ENCODE measurements at regions of chr9 and their contacts with region 1.

Region 1: GRCh38 chr9:128249908-128250838 is 25.6 kb downstream of the GOLGA2 start:
- DNase-seq: peak; percentile 95 to 100 (median 99)
- ATAC-seq: peak; percentile 95
- H3K4me3 ChIP-seq: peak overlapping the region; percentile 52 to 97
- H3K4me3 Mint-ChIP-seq: peak overlapping the region; percentile 86
- H3K27ac ChIP-seq: peak overlapping the region; percentile 52 to 86
- H3K27ac Mint-ChIP-seq: peak overlapping the region; percentile 97
- H3K4me1 ChIP-seq: peaks cover 22% of the 10 kb centered on the region
- H3K4me1 Mint-ChIP-seq: peaks cover 18% of the 10 kb centered on the region
- H3K27me3 ChIP-seq: no peaks in the 10 kb centered on the region
- H3K27me3 Mint-ChIP-seq: peaks cover 5% of the 10 kb centered on the region
- CTCF ChIP-seq: no peak

Region 2: GRCh38 chr9:127828262-127829031 is 421.7 kb before region 1 on chr9:
- CTCF ChIA-PET with region 1: no interaction called
- POLR2A ChIA-PET with region 1: no interaction called
- intact Hi-C with region 1: no loop called
- DNase-seq: no peak
- ATAC-seq: no peak
- H3K4me3 ChIP-seq: no peak overlapping the region
- H3K4me3 Mint-ChIP-seq: no peak overlapping the region
- H3K27ac ChIP-seq: no peak overlapping the region
- H3K27ac Mint-ChIP-seq: no peak overlapping the region
- H3K4me1 ChIP-seq: peaks cover 9% of the 10 kb centered on the region
- H3K4me1 Mint-ChIP-seq: peaks cover 12% of the 10 kb centered on the region
- H3K27me3 ChIP-seq: no peaks in the 10 kb centered on the region
- H3K27me3 Mint-ChIP-seq: no peaks in the 10 kb centered on the region
- CTCF ChIP-seq: no peak

Region 3: GRCh38 chr9:128159784-128160602 is 90.2 kb before region 1 on chr9 and contains the start of gene BBLN:
- CTCF ChIA-PET with region 1: no interaction called
- POLR2A ChIA-PET with region 1: interaction called, 7 read pairs
- intact Hi-C with region 1: loop called (anchors 1 kb)
- DNase-seq: peak; percentile 87 to 95 (median 93)
- ATAC-seq: peak; percentile 87
- H3K4me3 ChIP-seq: peak within 1 kb of the TSS; percentile 90 to 94
- H3K4me3 Mint-ChIP-seq: peak within 1 kb of the TSS; percentile 79
- H3K27ac ChIP-seq: peak within 1 kb of the TSS; percentile 70 to 86
- H3K27ac Mint-ChIP-seq: peak within 1 kb of the TSS; percentile 90
- H3K4me1 ChIP-seq: peaks cover 19% of the 10 kb centered on the region
- H3K4me1 Mint-ChIP-seq: peaks cover 17% of the 10 kb centered on the region
- H3K27me3 ChIP-seq: no peaks in the 10 kb centered on the region
- H3K27me3 Mint-ChIP-seq: no peaks in the 10 kb centered on the region
- CTCF ChIP-seq: no peak
- total RNA-seq, gene BBLN: 56.6 to 67.4 TPM

Region 4: DNA sequence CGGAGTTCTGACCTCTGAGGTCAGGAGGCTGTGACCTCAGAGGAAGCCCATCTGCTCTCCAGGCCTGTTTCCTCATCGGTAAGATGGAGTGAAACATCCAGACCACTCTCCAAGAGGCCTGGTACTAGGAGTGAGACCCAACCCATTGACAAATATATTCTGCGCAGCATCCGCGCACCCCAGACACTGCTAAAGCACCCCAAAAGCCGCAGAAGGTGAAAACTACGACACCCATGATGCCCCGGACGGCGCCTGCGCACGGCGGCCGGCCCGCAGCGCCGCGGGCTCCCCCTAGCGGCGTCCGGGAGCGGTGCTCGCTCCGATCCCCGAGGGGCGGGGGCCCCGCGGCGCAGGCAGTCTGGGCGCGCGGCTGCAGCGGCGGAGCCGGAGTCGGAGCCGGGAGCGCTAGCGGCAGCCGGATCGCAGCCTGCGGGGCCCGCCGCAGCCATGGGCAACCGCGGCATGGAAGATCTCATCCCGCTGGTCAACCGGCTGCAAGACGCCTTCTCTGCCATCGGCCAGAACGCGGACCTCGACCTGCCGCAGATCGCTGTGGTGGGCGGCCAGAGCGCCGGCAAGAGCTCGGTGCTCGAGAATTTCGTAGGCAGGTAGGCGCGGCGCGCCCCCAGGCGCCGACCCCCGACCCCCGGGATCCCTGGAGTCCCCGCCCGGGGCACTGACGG is 47.0 kb before region 1 on chr9 and contains the start of gene DNM1:
- CTCF ChIA-PET with region 1: no interaction called
- POLR2A ChIA-PET with region 1: no interaction called
- intact Hi-C with region 1: loop called (anchors 1 kb)
- DNase-seq: peak; percentile 52 to 88 (median 67)
- ATAC-seq: peak; percentile 99
- H3K4me3 ChIP-seq: peak within 1 kb of the TSS; percentile 55 to 66
- H3K4me3 Mint-ChIP-seq: peak within 1 kb of the TSS; percentile 72
- H3K27ac ChIP-seq: no peak within 1 kb of the TSS
- H3K27ac Mint-ChIP-seq: no peak within 1 kb of the TSS
- H3K4me1 ChIP-seq: peaks cover 13% of the 10 kb centered on the region
- H3K4me1 Mint-ChIP-seq: peaks cover 9% of the 10 kb centered on the region
- H3K27me3 ChIP-seq: peaks cover 3 to 9% of the 10 kb centered on the region in 2 experiments
- H3K27me3 Mint-ChIP-seq: peaks cover 10% of the 10 kb centered on the region
- CTCF ChIP-seq: peak; percentile 85
- total RNA-seq, gene DNM1: 1.4 to 1.5 TPM

Region 5: DNA sequence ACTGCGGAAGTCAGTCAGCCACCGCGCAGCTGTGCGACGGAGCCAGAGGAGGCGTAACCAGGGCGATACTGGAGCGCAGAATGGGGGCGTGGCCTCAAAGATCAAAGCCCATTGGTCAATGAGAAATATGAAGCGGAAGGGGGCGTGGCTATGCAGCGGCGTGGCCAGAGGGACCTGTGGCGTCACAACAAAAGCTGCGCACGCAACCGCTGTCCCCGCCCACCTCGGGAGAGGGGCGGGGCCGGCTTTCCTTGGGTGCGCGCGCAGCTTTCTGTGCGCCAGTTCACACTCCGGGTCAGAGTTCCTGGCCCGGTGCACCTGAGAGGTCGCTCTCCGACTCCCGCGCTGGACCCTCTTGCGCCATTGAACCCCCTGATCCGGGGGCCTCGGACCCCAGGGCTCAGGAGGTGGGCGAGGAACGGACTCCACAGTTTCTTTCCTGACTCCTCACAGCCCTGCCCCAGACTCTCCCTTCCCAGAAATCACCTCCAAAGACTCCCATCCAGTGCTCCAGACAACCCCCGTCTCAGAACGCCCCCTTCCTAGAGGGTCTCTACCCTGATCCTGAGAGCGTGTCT is 25.9 kb after region 1 on chr9 and contains the starts of genes GOLGA2 and SWI5:
- CTCF ChIA-PET with region 1: interaction called, 5 read pairs
- POLR2A ChIA-PET with region 1: interaction called, 13 read pairs
- intact Hi-C with region 1: loop called (anchors 1 kb)
- DNase-seq: peak; percentile 99 to 100 (median 100)
- ATAC-seq: peak; percentile 93
- H3K4me3 ChIP-seq: peak within 1 kb of the TSS; percentile 75 to 81
- H3K4me3 Mint-ChIP-seq: peak within 1 kb of the TSS; percentile 96
- H3K27ac ChIP-seq: peak within 1 kb of the TSS; percentile 76 to 81
- H3K27ac Mint-ChIP-seq: peak within 1 kb of the TSS; percentile 96
- H3K4me1 ChIP-seq: peaks cover 22% of the 10 kb centered on the region
- H3K4me1 Mint-ChIP-seq: peaks cover 32% of the 10 kb centered on the region
- H3K27me3 ChIP-seq: no peaks in the 10 kb centered on the region
- H3K27me3 Mint-ChIP-seq: no peaks in the 10 kb centered on the region
- CTCF ChIP-seq: no peak
- total RNA-seq, gene GOLGA2: 49.9 to 59.0 TPM
- total RNA-seq, gene SWI5: 3.5 to 4.3 TPM

Region 6: DNA sequence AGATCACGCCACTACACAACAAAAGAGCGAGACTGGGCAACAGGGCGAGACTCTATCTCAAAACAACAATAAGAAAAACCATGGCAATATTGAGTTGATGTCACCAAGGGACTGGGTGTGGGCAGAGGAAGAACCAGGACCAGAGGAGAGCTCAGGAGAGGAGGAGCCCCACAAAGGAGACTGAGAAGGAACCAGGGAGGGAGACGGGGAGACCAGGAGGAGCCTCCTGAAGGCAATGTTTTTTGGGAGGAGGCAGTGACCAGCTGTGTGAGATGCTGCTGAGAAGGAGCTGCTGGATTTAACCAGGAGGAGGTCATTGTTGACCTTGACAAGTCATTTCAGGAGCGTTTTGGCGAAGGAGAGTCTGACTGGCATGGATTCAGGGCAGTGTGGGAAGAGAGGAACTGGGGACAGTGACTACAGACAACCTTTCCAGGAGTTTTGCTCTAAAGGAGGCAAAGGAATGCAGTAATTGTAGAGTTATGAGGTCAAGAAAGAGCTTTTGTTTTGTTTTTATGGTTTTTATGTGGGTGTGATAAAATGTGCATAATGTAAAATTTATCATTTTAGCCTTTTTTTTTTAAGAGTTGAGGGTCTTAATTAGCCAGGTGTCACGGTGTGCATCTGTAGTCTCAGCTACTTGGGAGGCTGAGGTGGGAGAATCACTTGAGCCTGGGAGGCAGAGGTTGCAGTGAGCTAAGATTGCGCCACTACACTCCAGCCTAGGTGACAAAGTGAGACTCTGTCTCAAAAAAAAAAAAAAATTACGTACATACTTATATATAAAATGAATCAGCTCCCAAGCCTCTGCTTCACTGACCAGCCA is 54.2 kb after region 1 on chr9:
- CTCF ChIA-PET with region 1: no interaction called
- POLR2A ChIA-PET with region 1: no interaction called
- intact Hi-C with region 1: no loop called
- DNase-seq: no peak
- ATAC-seq: no peak
- H3K4me3 ChIP-seq: no peak overlapping the region
- H3K4me3 Mint-ChIP-seq: no peak overlapping the region
- H3K27ac ChIP-seq: no peak overlapping the region
- H3K27ac Mint-ChIP-seq: peak overlapping the region; percentile 32
- H3K4me1 ChIP-seq: no peaks in the 10 kb centered on the region
- H3K4me1 Mint-ChIP-seq: no peaks in the 10 kb centered on the region
- H3K27me3 ChIP-seq: no peaks in the 10 kb centered on the region
- H3K27me3 Mint-ChIP-seq: no peaks in the 10 kb centered on the region
- CTCF ChIP-seq: no peak

Region 7: DNA sequence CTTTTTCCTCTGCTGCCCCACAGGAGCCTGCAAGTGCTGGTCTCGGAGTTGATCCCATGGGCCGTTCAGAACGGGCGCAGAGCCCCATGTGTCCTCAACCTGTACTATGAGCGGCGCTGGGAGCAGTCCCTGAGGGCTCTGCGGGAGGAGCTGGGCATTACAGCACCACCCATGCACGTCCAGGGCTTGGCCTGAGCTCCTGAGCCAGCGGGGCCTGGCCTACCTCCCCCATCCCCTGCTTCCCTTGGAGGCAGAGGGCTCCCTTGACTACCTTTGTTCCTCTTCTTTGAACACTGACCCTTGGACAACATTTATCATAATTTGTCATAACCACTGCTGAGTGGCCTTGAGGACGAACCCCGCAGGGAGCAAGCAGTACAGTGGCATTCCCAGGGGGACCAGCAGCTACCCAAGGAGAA is 83.3 kb after region 1 on chr9:
- CTCF ChIA-PET with region 1: no interaction called
- POLR2A ChIA-PET with region 1: no interaction called
- intact Hi-C with region 1: no loop called
- DNase-seq: no peak
- ATAC-seq: no peak
- H3K4me3 ChIP-seq: no peak overlapping the region
- H3K4me3 Mint-ChIP-seq: no peak overlapping the region
- H3K27ac ChIP-seq: no peak overlapping the region
- H3K27ac Mint-ChIP-seq: no peak overlapping the region
- H3K4me1 ChIP-seq: no peaks in the 10 kb centered on the region
- H3K4me1 Mint-ChIP-seq: no peaks in the 10 kb centered on the region
- H3K27me3 ChIP-seq: no peaks in the 10 kb centered on the region
- H3K27me3 Mint-ChIP-seq: no peaks in the 10 kb centered on the region
- CTCF ChIP-seq: no peak

Region 8: DNA sequence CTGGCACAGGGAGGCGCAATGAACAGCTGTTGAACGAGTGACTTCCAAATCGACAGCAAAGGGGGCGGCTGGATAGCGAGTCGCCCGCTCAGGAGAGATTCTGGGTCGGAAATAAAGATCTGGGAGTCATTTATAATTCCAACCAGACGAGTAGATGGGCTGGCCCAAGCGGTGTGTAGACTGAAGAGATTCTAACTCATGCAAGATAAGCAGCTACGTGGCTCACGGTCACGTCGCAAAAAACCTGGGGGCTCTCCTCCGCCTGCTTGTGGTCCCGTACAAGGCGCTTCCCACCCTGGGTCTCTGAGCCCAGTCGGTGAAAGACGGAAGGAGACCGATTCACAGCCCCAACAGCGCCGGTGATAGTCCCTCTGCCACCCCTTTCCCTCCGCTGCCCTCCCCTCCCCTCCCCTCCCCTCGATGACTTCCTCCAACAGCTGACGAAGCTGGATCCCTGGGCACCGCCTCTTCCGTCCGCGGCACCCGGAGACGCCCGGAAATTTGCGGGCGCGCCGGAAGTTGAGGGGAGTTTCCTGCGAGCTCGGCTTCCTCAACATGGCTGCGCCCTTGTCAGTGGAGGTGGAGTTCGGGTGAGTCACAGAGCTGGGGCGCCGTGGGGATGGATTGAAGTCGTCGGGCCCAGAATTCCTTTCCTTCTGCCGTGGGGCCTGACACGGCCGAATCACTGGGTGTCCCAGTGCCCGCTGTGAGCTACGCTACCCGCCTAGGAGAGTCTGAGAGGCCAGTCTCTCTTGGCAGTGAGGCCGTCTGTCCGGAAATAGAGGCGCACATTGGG is 120.9 kb after region 1 on chr9 and contains the start of gene URM1:
- CTCF ChIA-PET with region 1: no interaction called
- POLR2A ChIA-PET with region 1: interaction called, 3 read pairs
- intact Hi-C with region 1: loop called in 1 of 2 experiments (anchors 1 kb)
- DNase-seq: peak; percentile 91 to 98 (median 96)
- ATAC-seq: peak; percentile 90
- H3K4me3 ChIP-seq: peak within 1 kb of the TSS; percentile 84 to 95
- H3K4me3 Mint-ChIP-seq: peak within 1 kb of the TSS; percentile 97
- H3K27ac ChIP-seq: peak within 1 kb of the TSS; percentile 76 to 96
- H3K27ac Mint-ChIP-seq: peak within 1 kb of the TSS; percentile 98
- H3K4me1 ChIP-seq: peaks cover 16% of the 10 kb centered on the region
- H3K4me1 Mint-ChIP-seq: peaks cover 43% of the 10 kb centered on the region
- H3K27me3 ChIP-seq: no peaks in the 10 kb centered on the region
- H3K27me3 Mint-ChIP-seq: no peaks in the 10 kb centered on the region
- CTCF ChIP-seq: no peak
- total RNA-seq, gene URM1: 30.4 to 31.5 TPM

Region 9: DNA sequence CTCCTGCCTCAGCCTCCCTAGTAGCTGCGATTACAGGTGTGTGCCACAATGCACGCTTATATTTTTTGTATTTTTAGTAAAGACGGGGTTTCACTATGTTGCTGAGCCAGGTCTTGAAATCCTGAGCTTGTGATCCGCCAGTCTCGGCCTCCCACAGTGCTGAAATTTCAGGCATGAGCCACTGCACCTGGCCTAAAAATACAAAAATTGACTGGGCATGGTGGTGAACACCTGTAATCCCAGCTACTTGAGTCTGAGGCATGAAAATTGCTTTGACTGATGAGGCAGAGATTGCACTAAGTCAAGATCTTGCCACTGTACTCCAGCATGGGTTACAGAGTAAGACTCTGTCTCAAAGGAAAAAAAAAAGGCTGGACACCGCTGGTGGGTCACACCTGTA is 419.6 kb after region 1 on chr9:
- CTCF ChIA-PET with region 1: no interaction called
- POLR2A ChIA-PET with region 1: no interaction called
- intact Hi-C with region 1: no loop called
- DNase-seq: no peak
- ATAC-seq: no peak
- H3K4me3 ChIP-seq: no peak overlapping the region
- H3K4me3 Mint-ChIP-seq: no peak overlapping the region
- H3K27ac ChIP-seq: no peak overlapping the region
- H3K27ac Mint-ChIP-seq: no peak overlapping the region
- H3K4me1 ChIP-seq: no peaks in the 10 kb centered on the region
- H3K4me1 Mint-ChIP-seq: no peaks in the 10 kb centered on the region
- H3K27me3 ChIP-seq: no peaks in the 10 kb centered on the region
- H3K27me3 Mint-ChIP-seq: no peaks in the 10 kb centered on the region
- CTCF ChIP-seq: no peak

Region 10: DNA sequence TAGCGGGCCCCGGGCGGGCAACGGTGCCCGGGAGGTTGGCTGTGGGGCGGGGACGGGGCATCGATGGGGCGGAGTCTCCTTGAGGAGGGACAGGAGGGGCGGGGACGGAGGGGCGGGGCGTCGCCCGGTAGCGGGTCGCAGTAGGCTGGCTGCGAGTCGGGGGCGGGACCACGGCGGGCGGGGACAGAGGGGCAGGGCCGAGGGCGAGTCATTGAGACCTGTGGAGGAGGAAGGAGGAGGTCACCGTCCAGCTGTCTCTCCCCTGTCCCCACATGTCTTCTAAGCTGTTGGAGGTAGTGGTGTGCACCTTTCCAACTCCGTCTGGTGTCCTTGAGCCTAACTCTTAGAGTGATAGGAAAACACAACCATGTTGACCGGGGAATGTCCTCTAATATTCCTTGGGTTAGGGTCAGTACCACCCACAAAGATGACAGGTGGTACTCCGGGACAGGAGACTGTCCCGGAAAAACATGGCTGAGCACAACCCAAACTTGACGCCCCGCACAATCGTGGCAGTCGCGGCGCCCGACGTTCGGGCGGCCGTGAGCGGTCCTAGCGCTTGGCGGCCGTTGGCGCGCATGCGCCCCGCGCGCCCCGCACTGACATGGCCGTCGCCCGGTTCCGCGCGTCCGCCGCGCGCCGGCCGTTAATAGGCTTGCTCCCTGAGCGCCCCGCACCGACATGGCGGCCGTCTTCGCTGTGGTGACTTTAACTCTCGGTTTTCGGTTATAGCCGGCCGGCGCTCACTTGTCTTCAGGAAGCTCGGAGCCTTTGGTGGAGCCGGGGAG is 860.8 kb after region 1 on chr9 and contains the starts of genes CRAT and PTPA:
- CTCF ChIA-PET with region 1: no interaction called
- POLR2A ChIA-PET with region 1: no interaction called
- intact Hi-C with region 1: loop called in 1 of 2 experiments (anchors 5 kb)
- DNase-seq: peak; percentile 91 to 97 (median 96)
- ATAC-seq: peak; percentile 88
- H3K4me3 ChIP-seq: peak within 1 kb of the TSS; percentile 69 to 85
- H3K4me3 Mint-ChIP-seq: peak within 1 kb of the TSS; percentile 93
- H3K27ac ChIP-seq: peak within 1 kb of the TSS; percentile 79 to 81
- H3K27ac Mint-ChIP-seq: peak within 1 kb of the TSS; percentile 91
- H3K4me1 ChIP-seq: peaks cover 21% of the 10 kb centered on the region
- H3K4me1 Mint-ChIP-seq: peaks cover 39% of the 10 kb centered on the region
- H3K27me3 ChIP-seq: no peaks in the 10 kb centered on the region
- H3K27me3 Mint-ChIP-seq: no peaks in the 10 kb centered on the region
- CTCF ChIP-seq: no peak
- total RNA-seq, gene CRAT: 5.6 to 6.3 TPM
- total RNA-seq, gene PTPA: 24.7 to 26.8 TPM